Activated T-helper 1 cell treated with anti-CD3 and anti-CD28 coated beads, Interleukin-12 subunit alpha, Interleukin-12 subunit beta, Interleukin-2, Interleukin-4 antibody, amounts not matched to agents 30 ng/mL and 10 ng/mL and 1 ng/mL, durations not matched to agents 14 hours and 24 hours and 36 hours (primary cell): ENCODE measurements at regions of chr7 and their contacts with region 1.

Region 1: DNA sequence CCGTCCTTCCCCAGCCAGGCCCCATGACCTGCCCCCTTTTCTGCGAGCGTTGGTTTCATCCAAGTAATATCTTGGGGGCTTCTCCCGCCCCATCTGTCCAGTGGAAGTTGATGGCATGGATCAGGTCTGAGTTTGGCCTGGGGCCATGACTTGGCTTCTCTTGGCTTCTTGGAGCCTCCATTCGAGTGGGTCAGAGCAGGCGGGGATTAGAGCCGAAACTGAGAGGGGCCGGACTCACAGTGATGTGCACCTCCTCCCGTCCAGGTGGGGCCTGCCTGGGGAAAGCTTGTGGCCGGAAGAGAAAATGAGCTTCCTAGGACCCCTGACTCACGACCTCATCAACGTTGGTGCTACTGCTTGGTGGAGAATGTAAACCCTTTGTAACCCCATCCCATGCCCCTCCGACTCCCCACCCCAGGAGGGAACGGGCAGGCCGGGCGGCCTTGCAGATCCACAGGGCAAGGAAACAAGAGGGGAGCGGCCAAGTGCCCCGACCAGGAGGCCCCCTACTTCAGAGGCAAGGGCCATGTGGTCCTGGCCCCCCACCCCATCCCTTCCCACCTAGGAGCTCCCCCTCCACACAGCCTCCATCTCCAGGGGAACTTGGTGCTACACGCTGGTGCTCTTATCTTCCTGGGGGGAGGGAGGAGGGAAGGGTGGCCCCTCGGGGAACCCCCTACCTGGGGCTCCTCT is 15.1 kb upstream of the LIMK1 start:
- DNase-seq: no peak
- H3K4me3 Mint-ChIP-seq: no peak overlapping the region
- H3K27ac Mint-ChIP-seq: no peak overlapping the region
- H3K4me1 Mint-ChIP-seq: peaks cover 4% of the 10 kb centered on the region
- H3K27me3 Mint-ChIP-seq: no peaks in the 10 kb centered on the region

Region 2: GRCh38 chr7:74083117-74083876 is 14.8 kb after region 1 on chr7 and contains the start of gene LIMK1:
- intact Hi-C with region 1: loop called (anchors 1 kb)
- DNase-seq: peak; percentile 78
- H3K4me3 Mint-ChIP-seq: peak within 1 kb of the TSS; percentile 88
- H3K27ac Mint-ChIP-seq: peak within 1 kb of the TSS; percentile 89
- H3K4me1 Mint-ChIP-seq: peaks cover 12% of the 10 kb centered on the region
- H3K27me3 Mint-ChIP-seq: peaks cover 2% of the 10 kb centered on the region
- total RNA-seq, gene LIMK1: 24.3 and 25.2 TPM in 2 replicates

Region 3: GRCh38 chr7:74094224-74095101 is 25.9 kb after region 1 on chr7:
- intact Hi-C with region 1: loop called (anchors 2 kb)
- DNase-seq: peak; percentile 64
- H3K4me3 Mint-ChIP-seq: peak overlapping the region; percentile 82
- H3K27ac Mint-ChIP-seq: peak overlapping the region; percentile 95
- H3K4me1 Mint-ChIP-seq: peaks cover 18% of the 10 kb centered on the region
- H3K27me3 Mint-ChIP-seq: no peaks in the 10 kb centered on the region

Region 4: DNA sequence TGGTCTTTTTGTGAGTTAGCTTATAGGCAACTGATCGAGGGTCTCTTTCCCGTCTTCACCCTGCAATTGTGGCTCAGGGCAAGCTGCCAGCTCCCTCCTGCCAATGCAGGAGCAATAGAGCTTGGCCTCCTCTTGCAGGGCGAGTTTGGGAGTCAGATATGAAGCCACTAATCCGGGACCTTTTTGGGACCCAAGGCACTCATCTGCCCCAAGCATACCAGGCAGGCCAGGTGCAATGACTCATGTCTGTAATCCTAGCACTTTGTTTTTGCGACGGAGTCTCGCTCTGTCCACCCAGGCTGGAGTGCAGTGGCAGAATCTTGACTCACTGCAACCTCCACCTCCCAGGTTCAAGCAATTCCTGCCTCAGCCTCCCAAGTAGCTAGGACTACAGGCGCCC is 36.2 kb after region 1 on chr7:
- intact Hi-C with region 1: loop called (anchors 5 kb)
- DNase-seq: no peak
- H3K4me3 Mint-ChIP-seq: no peak overlapping the region
- H3K27ac Mint-ChIP-seq: no peak overlapping the region
- H3K4me1 Mint-ChIP-seq: no peaks in the 10 kb centered on the region
- H3K27me3 Mint-ChIP-seq: no peaks in the 10 kb centered on the region

Region 5: DNA sequence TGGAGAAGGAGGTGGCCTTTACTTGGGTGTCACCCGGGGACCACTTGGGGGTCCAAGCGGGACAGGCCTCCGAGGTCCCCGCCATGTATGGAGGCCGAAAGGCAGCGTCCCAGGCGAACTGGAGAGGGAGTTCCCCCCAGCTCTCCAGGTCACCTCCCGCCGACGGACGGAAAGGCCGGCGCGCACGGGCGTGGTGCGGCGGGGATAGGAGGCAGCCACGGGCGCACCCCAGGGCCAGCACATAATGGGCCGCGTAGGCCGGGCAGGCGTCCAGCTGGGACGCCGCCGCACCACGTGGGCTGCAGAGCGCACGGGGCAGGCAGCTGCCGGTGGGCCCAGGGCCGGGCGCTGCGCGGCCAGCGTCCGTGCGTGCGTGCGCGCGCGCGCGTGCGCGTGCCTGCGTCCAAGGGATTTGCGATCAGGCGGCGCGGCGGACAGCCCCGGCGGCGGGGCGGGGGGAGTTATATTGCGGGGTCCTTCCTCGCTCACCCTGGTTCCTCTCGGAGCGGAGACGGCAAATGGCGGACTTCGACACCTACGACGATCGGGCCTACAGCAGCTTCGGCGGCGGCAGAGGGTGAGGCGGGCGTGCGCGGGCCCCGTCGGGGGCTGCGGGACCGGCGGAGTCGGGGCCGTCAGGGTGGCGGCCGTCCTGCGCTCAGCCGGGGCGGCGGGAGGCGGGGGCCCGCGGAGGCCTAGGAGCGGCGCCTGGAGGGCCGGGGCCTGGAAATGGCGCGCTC is 105.5 kb after region 1 on chr7 and contains the start of gene EIF4H:
- intact Hi-C with region 1: loop called (anchors 1 kb)
- DNase-seq: peak; percentile 93
- H3K4me3 Mint-ChIP-seq: peak within 1 kb of the TSS; percentile 94
- H3K27ac Mint-ChIP-seq: peak within 1 kb of the TSS; percentile 90
- H3K4me1 Mint-ChIP-seq: peaks cover 45% of the 10 kb centered on the region
- H3K27me3 Mint-ChIP-seq: peaks cover 3% of the 10 kb centered on the region
- total RNA-seq, gene EIF4H: 343 and 355 TPM in 2 replicates

Region 6: DNA sequence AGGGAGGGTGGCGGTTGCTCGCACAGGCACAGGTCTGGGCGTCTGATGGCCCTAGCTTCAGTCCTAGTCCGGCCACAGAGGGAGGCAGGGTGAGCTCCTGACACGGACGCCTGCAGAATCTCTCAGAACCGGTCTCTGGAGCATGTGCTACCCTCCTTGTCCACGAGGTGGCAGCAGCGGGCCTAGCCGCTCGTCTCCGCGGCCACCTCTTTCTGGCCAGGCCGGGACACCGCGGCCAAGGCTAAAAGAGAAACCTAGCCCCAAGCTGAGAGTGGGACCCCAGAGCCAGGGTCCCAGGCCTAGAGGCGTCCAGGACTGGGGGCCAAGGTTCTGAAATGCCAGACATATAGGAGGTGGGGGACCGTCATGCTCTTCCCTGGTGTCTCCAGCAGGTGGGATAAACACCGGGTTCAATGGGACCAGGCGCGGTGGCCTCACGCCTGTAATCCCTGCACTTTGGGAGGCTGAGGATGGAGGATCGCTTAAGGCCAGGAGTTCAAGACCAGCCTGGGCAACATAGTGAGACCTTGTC is 138.1 kb after region 1 on chr7:
- intact Hi-C with region 1: loop called (anchors 5 kb)
- DNase-seq: peak; percentile 72
- H3K4me3 Mint-ChIP-seq: peak overlapping the region; percentile 49
- H3K27ac Mint-ChIP-seq: no peak overlapping the region
- H3K4me1 Mint-ChIP-seq: peaks cover 23% of the 10 kb centered on the region
- H3K27me3 Mint-ChIP-seq: no peaks in the 10 kb centered on the region

Region 7: DNA sequence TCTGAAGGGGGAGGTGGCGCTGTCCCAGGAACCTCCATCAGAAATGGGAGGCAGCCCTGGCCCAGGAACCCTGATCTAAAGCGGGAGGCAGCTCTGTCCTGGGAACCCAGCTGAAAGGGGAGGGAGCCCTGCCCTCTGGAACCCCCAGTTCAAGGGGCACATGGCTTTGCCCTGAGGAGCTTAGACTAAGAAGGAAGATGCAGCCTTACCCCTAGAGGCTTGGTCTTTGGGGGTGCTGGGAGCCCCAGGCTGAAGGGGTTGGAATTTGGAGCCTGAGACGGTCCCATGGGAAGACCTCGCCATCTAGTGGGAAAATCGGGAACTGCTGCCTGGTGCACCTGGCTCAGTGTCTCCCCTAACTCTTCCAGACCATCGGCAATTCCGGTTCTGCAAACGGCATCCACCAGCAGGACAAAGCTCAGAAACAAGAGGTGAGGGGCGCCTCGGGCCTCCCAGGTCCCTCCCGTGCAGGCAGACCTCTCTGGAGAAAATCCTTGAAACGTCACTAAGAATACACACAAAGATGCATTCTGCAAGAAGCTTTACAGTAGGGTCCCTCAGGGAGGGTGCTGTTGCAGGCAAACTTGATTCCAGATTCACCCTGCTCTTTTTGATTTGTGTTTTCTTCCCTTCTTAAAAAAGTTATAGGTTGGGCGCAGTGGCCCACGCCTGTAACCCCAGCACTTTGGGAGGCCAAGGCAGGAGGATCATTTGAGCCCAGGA is 332.8 kb after region 1 on chr7:
- intact Hi-C with region 1: loop called (anchors 1 kb)
- DNase-seq: peak; percentile 47
- H3K4me3 Mint-ChIP-seq: no peak overlapping the region
- H3K27ac Mint-ChIP-seq: no peak overlapping the region
- H3K4me1 Mint-ChIP-seq: no peaks in the 10 kb centered on the region
- H3K27me3 Mint-ChIP-seq: no peaks in the 10 kb centered on the region